H1 (cell line): ENCODE measurements at regions of chr14 and their contacts with region 1.

Region 1: GRCh38 chr14:80973931-80974641 is 18.7 kb downstream of the TSHR start:
- DNase-seq: no peak
- H3K4me3 ChIP-seq: no peak overlapping the region
- H3K27ac ChIP-seq: no peak overlapping the region
- H3K4me1 ChIP-seq: no peaks in the 10 kb centered on the region
- H3K27me3 ChIP-seq: no peaks in the 10 kb centered on the region
- CTCF ChIP-seq: no peak
- EP300 ChIP-seq: no peak
- POLR2A ChIP-seq: no peak
- RAD21 ChIP-seq: no peak

Region 2: DNA sequence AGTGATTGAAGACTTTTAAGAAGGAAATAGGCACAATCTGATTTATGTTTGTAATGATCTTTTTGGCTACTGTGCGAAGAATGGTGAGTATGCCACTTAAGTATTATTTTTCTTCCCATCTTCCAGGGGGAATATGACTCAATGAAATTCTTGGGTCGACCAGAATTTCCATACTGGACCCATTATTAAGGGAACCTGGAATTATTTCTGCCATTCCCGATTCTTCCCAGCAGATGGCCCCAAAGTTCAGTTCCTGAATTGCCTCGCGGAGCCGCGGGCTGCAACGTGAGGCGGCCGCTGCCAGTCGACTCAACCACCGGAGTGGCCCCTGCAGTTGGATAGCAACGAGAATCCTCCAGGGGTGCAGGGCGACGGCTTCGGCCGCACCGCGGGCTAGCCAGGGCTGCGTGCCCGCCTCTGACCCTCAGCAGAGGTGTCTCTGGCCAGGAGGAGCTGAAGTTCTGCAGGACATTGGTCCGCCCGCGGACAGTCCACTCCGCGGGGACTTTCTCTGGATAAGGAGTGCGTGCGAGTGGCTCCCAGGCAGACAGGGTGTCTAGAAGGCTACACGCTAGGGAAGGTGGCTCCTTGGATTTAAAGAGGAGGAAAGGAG is 19.3 kb before region 1 on chr14:
- CTCF ChIA-PET with region 1: interaction called, 52 read pairs
- POLR2A ChIA-PET with region 1: no interaction called
- DNase-seq: peak; percentile 38 to 89
- H3K4me3 ChIP-seq: peak overlapping the region; percentile 18 to 77 (median 64); a peak in 7 of 8 replicates
- H3K27ac ChIP-seq: no peak overlapping the region
- H3K4me1 ChIP-seq: peaks cover 0 to 6% (median under 1%) of the 10 kb centered on the region in 4 experiments; a peak in 2 of 7 replicates
- H3K27me3 ChIP-seq: peaks cover 2 to 9% (median 6%) of the 10 kb centered on the region in 4 experiments; a peak in 5 of 7 replicates
- CTCF ChIP-seq: peak; percentile 53 to 84 (median 69)
- EP300 ChIP-seq: no peak
- POLR2A ChIP-seq: no peak
- RAD21 ChIP-seq: peak; percentile 85 to 93

Region 3: DNA sequence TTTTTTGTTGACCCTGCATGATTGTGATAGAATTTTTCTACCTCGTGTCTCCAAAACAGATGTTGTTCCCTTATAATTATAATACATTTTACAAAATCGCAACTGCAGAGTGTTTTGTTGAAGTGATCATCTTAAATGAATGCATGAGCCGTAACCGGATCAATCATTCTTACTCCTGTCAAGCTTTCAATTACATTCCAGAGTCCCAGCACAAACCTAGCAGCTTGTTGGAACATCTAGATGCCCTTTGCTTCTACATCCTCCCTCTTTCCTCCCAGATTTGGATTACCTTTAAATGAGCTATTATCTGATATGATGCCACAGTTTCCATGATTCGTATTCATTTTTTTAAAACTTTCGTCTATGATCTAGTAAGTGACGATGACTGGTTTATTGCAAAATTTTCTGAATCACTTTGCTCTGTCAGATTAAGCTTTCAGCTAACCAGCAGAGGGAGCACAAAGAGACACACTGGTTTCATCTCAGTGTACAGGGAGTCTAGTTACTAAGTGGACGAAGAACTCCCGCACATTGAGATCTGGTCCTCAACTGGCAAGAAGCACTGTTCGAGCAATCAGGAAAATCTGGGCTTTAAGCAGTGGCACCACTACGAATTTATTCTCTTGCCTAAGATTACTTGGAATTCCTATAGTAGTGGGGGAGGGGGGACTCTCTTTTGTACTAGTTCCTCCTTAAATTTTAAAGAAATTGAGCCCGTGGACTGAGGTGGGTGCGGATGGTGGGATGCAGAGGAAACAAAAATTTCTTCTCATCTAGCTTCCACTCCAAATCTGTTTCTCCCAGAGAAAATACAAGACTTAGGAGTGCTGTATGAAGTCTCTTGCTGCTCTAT is 22.2 kb after region 1 on chr14:
- CTCF ChIA-PET with region 1: interaction called, 104 read pairs
- POLR2A ChIA-PET with region 1: no interaction called
- DNase-seq: no peak
- H3K4me3 ChIP-seq: no peak overlapping the region
- H3K27ac ChIP-seq: no peak overlapping the region
- H3K4me1 ChIP-seq: no peaks in the 10 kb centered on the region
- H3K27me3 ChIP-seq: no peaks in the 10 kb centered on the region
- CTCF ChIP-seq: peak in 2 of 3 experiments; percentile 38 to 46; a peak in 3 of 4 replicates
- EP300 ChIP-seq: no peak
- POLR2A ChIP-seq: no peak
- RAD21 ChIP-seq: peak; percentile 34 to 35

Region 4: GRCh38 chr14:81085596-81085995 is 111.5 kb after region 1 on chr14:
- CTCF ChIA-PET with region 1: no interaction called
- POLR2A ChIA-PET with region 1: no interaction called
- DNase-seq: no peak
- H3K4me3 ChIP-seq: no peak overlapping the region
- H3K27ac ChIP-seq: no peak overlapping the region
- H3K4me1 ChIP-seq: no peaks in the 10 kb centered on the region
- H3K27me3 ChIP-seq: no peaks in the 10 kb centered on the region
- CTCF ChIP-seq: no peak
- EP300 ChIP-seq: no peak
- POLR2A ChIP-seq: no peak
- RAD21 ChIP-seq: no peak